Aorta (tissue), 5 donors: ENCODE measurements at regions of chr3 and their contacts with region 1.

Region 1: DNA sequence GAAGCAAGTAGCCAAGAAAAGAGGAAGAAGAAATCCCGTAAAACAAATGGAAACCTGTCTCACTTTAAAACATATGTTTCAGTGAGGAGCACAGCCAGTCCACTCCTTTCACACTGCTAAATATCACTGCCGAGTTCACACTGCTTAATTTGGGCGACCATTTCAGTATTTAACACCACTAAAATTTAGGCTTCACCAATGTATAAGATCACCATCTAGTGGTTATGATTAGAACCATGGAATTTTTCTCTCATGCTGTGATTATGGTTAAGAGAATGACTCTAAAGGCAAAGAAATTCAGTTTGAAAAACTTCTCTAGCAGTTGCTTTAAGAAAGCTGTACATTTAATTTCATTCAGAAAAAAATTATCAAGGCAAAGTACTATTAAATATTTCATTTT is 16.6 kb downstream of the SLC4A7 start:
- DNase-seq: no peak
- ATAC-seq: peak; percentile 74
- H3K4me3 ChIP-seq: no peak overlapping the region
- H3K27ac ChIP-seq: no peak overlapping the region
- H3K4me1 ChIP-seq: no peaks in the 10 kb centered on the region
- H3K27me3 ChIP-seq: no peaks in the 10 kb centered on the region

Region 2: GRCh38 chr3:27312044-27312668 is 155.4 kb before region 1 on chr3:
- intact Hi-C with region 1: loop called (anchors 10 kb)
- DNase-seq: no peak
- ATAC-seq: peak; percentile 75
- H3K4me3 ChIP-seq: no peak overlapping the region
- H3K27ac ChIP-seq: no peak overlapping the region
- H3K4me1 ChIP-seq: no peaks in the 10 kb centered on the region
- H3K27me3 ChIP-seq: no peaks in the 10 kb centered on the region